Caco-2 (cell line): ENCODE measurements at regions of chr11 and their contacts with region 1.

Region 1: GRCh38 chr11:9498457-9499078 is 37.8 kb downstream of the ZNF143 start:
- DNase-seq: no peak
- H3K4me3 ChIP-seq: no peak overlapping the region
- H3K4me3 Mint-ChIP-seq: no peak overlapping the region
- H3K27ac Mint-ChIP-seq: peak overlapping the region; percentile 30
- H3K4me1 ChIP-seq: peaks cover 44% of the 10 kb centered on the region
- H3K4me1 Mint-ChIP-seq: peaks cover 26% of the 10 kb centered on the region
- H3K27me3 ChIP-seq: no peaks in the 10 kb centered on the region
- H3K27me3 Mint-ChIP-seq: no peaks in the 10 kb centered on the region
- CTCF ChIP-seq: no peak

Region 2: DNA sequence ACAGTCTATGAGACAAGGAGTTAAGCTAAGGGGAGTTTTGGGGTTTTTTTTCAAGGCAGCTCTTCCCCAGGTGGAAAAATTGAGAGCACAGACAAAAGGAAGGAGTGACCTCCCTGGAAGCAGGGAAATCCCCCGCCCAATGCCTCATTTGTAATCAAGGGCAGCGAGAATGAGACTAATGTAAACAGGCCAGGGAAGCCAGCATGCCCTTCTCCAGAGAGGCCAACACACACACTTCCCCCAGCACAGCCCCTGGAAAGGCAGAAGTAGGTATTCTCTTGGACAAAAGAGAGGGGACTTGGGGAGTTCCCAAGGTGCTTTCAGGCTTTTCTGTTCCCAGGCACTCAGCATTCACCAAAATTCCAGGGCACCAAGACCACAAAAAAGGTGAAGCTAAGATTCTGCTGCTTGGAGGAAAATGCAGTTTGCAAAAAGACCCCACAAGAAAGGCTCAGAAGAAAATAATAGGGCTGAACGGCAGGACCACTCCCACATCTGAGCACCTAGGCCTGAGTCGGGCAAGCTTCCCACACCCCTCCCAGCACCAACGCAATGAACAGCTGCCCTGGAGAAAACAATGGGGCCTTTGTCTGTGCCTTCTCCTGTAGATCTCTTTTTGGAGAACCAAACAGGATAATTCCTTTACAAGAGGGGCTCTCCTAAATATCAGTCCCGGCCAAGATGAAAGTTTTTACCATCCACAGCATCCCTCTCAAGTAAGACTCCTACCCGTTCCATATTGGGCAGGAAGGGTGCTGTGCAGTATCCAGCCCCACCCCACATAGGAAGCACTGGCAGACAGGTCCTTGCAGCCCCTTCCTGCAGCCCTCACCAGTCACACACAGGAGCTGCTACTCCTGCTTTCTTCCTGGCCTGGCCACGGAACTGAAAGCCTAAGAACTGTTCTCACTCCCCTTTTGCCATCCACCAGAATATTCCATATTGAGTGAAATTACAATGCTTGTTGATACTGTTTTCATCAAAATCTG is 658.3 kb before region 1 on chr11:
- CTCF ChIA-PET with region 1: no interaction called
- POLR2A ChIA-PET with region 1: no interaction called
- intact Hi-C with region 1: no loop called
- DNase-seq: no peak
- H3K4me3 ChIP-seq: no peak overlapping the region
- H3K4me3 Mint-ChIP-seq: peak overlapping the region; percentile 7
- H3K27ac Mint-ChIP-seq: peak overlapping the region; percentile 29
- H3K4me1 ChIP-seq: peaks cover 30% of the 10 kb centered on the region
- H3K4me1 Mint-ChIP-seq: peaks cover 32% of the 10 kb centered on the region
- H3K27me3 ChIP-seq: no peaks in the 10 kb centered on the region
- H3K27me3 Mint-ChIP-seq: no peaks in the 10 kb centered on the region
- CTCF ChIP-seq: no peak

Region 3: DNA sequence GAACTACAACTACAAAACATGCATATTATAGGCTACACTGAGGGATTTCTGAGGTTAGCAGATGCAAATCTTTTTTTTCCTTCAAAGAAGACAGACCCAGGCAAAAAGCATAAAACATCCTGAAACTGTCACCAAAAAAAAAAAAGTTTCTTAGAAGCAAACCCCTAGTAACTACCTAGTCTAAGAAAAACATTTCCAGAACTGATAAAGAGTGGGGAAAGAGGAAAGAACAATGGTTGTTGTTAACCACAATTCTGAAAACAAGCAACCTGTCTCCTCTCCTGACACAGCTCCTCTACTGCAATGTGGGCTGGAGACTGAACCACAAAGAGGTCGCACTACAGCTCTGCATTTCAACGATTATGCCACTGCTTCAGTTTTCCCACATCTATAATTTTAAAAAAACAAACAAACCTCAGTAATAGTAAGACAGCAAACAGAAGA is 248.4 kb before region 1 on chr11:
- CTCF ChIA-PET with region 1: no interaction called
- POLR2A ChIA-PET with region 1: interaction called, 22 read pairs
- intact Hi-C with region 1: no loop called
- DNase-seq: no peak
- H3K4me3 ChIP-seq: no peak overlapping the region
- H3K4me3 Mint-ChIP-seq: no peak overlapping the region
- H3K27ac Mint-ChIP-seq: no peak overlapping the region
- H3K4me1 ChIP-seq: no peaks in the 10 kb centered on the region
- H3K4me1 Mint-ChIP-seq: no peaks in the 10 kb centered on the region
- H3K27me3 ChIP-seq: no peaks in the 10 kb centered on the region
- H3K27me3 Mint-ChIP-seq: no peaks in the 10 kb centered on the region
- CTCF ChIP-seq: no peak

Region 4: DNA sequence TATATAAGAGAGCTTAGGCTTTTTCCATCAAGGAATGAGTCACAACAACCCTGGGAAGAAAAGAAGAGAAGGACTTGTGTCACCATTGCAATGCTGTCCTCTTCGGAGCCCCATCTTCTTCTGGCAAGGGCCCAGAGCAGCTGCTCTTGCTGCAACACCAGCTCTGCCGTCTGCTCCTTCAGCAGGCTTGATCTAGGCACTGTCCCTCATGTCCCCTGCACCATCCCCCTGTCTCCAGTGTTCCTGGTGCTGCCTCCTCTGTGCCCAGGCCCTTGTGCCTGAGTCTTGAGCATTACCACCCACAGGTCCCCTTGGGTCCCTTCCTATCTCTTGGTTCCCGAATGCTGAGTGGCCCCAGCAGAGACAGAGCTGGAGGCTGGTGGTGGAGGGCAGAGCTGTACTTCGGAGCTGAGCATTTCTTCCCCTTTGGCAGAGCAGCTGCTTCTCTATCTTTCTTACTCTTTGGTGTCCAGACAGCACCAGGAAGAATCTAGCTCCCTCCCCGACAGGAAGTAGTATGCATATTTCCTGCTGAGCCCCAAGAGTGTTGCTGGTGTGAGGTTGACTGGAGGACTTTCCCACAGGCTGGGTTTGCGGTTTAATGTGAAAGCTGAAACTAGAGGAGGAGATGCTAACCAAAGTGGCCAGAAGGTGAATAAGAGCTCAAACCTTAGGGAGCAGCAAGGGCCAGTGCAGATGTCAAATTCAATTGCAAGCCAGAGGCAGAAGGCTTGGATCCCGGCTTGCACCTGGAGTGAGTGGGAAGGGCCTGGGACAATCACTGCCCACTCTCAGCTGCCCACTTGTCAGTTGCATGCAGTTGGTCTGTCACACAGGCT is 102.7 kb after region 1 on chr11:
- CTCF ChIA-PET with region 1: no interaction called
- POLR2A ChIA-PET with region 1: no interaction called
- intact Hi-C with region 1: no loop called
- DNase-seq: no peak
- H3K4me3 ChIP-seq: no peak overlapping the region
- H3K4me3 Mint-ChIP-seq: no peak overlapping the region
- H3K27ac Mint-ChIP-seq: peak overlapping the region; percentile 48
- H3K4me1 ChIP-seq: peaks cover 17% of the 10 kb centered on the region
- H3K4me1 Mint-ChIP-seq: peaks cover 28% of the 10 kb centered on the region
- H3K27me3 ChIP-seq: no peaks in the 10 kb centered on the region
- H3K27me3 Mint-ChIP-seq: no peaks in the 10 kb centered on the region
- CTCF ChIP-seq: no peak